Kidney (tissue), 22 donors: ENCODE measurements at regions of chr22 and their contacts with region 1.

Region 1: DNA sequence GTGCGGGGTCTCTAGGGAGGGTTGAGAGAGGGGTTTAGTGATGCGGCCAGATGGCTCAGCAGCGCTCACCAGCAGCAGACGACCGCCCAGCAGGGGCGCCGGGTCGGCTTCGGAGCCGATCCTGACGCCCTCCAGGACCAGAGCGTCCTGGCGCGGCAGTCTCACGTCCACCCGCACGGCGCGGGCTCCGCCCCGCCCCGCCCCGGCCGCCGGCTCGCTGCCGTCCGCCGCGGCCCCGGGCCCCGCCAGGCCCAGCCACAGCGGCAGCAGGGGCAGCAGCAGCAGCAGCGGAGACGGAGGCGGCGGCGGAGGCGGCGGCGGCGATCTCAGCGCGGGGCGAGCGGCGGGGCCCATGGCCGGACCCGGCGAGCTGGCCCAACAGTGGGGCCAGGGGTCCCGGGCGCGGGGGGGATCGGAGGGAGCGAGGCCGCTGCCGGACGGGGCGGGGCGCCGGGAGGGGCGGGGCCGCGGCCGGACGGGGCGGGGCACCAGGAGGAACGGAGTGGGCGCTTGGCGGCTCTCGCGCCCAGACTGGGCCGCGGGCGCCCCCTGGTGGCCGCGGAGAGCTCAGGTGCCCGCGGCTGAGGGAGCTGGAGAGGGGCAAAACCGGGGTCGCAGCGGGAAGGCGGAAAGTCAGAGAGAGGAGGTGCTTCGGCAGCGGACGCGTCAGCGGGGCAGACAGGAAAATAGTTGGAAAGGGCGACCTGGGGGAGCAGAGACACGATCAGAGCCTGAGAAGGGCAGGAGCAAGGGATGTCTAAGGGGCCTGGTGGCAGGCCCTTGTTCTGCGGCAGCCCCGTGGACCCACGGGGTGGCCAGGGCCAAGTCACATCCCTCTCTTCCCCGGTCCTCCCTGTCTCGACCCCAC is at the start of gene RNF215:
- DNase-seq: peak; percentile 89 to 95 (median 93)
- H3K4me3 ChIP-seq: peak within 1 kb of the TSS; percentile 62 to 69 (median 67)
- H3K27ac ChIP-seq: no peak within 1 kb of the TSS
- H3K4me1 ChIP-seq: peaks cover 0 to 12% (median 1%) of the 10 kb centered on the region in 3 donors
- H3K27me3 ChIP-seq: no peaks in the 10 kb centered on the region
- CTCF ChIP-seq: peak; percentile 83
- total RNA-seq, gene RNF215: 19.7 TPM

Region 2: DNA sequence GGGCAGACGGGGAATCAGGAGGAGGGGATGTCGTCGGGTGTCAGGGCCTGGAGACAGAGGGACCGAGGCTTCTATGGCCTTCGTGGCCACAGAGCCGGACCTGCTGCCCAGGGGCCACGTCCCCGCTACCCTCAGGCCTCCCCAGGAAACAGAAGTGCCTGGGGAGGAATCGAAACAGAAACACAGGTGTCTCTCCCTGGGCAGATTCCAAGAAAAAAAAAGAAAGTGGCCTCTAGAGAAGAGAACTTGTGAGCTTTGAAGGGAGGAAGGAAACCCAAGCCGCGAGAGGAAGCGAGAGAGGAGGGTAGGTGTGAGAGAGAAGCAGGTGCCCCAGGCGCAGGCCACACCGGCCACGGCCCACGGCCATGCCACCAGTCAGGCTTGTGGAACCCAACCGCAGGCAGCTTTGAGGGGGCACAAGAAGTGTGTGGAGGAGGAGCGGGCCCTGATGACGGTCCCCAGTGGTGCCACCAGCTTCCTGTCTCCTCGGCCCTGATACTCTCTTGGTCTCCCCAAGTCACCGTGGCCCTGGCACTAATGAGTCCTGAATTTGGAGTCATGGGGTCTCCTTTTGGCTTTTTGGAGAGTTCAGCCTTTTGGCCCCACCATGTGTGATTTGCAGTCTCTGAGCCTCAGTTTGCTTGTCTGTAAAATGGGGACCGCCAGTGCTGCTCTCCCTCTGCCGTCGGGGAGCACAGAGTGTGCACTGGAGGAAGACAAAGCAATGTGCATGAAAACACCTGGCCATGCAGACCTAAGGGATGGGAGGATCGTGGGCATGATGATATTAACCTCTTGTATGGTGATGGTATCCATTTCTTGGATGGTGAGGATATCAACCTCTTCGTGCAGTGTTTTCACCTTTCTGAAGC is 165.8 kb before region 1 on chr22:
- intact Hi-C with region 1: no loop called
- DNase-seq: no peak
- H3K4me3 ChIP-seq: no peak overlapping the region
- H3K27ac ChIP-seq: no peak overlapping the region
- H3K4me1 ChIP-seq: peaks cover 0 to 2% (median 0%) of the 10 kb centered on the region in 3 donors
- H3K27me3 ChIP-seq: no peaks in the 10 kb centered on the region
- CTCF ChIP-seq: no peak

Region 3: GRCh38 chr22:30265823-30266444 is 121.3 kb before region 1 on chr22:
- intact Hi-C with region 1: loop called (anchors 5 kb)
- DNase-seq: peak in 1 of 5 donors; percentile 89
- H3K4me3 ChIP-seq: peak overlapping the region in 1 of 3 donors; percentile 13
- H3K27ac ChIP-seq: peak overlapping the region in 1 of 2 donors; percentile 70
- H3K4me1 ChIP-seq: peaks cover 0 to 4% (median 0%) of the 10 kb centered on the region in 3 donors
- H3K27me3 ChIP-seq: no peaks in the 10 kb centered on the region
- CTCF ChIP-seq: no peak